HCT116 (cell line): ENCODE measurements at regions of chr20 and their contacts with region 1.

Region 1: GRCh38 chr20:63537525-63538203 is 488 bp upstream of the PTK6 start:
- DNase-seq: peak; percentile 93
- ATAC-seq: peak; percentile 84
- H3K4me3 ChIP-seq: peak overlapping the region; percentile 67
- H3K27ac ChIP-seq: peak overlapping the region; percentile 97
- H3K4me1 ChIP-seq: peaks cover 41 to 88% of the 10 kb centered on the region in 2 experiments
- H3K27me3 ChIP-seq: no peaks in the 10 kb centered on the region
- CTCF ChIP-seq: peak in 2 of 3 experiments; percentile 80 to 86; a peak in 4 of 6 replicates
- POLR2A ChIP-seq: no peak
- RAD21 ChIP-seq: no peak

Region 2: DNA sequence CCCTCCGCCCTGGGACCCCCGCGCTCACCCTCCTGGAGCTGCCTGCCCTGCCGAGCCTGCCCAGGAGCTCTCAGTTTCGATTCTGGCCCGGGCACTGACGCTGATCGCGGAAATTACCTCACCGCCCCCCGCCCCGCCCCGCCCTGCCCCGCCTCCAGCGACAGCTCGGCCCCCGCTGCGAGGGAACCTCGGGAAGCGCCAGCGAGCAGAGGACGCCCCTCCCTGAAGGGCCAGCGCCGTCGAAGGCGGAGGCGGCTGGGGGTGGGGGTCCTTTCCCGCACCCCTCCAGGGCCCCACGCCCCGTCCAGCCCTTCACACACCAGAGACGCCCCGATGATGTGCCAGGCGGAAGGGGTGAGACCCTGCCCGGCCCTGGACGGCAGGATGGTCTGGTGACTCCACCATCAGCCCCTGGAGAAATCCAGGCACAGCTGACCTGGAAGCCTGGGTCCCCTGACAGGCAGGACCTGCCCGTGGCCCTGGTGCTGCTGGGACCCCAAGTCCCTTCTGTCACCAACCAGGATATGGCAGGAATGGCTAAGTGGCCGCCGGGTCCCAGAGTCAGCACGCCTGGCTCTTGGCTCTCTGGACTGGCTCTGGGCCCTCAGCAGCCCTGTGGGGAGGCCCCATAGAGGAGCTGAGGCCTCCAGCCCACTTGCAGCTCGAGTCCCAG is 36.6 kb after region 1 on chr20 and contains the start of gene HELZ2:
- CTCF ChIA-PET with region 1: interaction called, 24 read pairs
- POLR2A ChIA-PET with region 1: interaction called, 3 read pairs
- RAD21 ChIA-PET with region 1: no interaction called
- intact Hi-C with region 1: loop called (anchors 2 kb)
- DNase-seq: peak; percentile 16
- ATAC-seq: peak; percentile 86
- H3K4me3 ChIP-seq: peak within 1 kb of the TSS; percentile 83 to 86
- H3K27ac ChIP-seq: peak within 1 kb of the TSS; percentile 44; the same call in 1 of the 2 replicates
- H3K4me1 ChIP-seq: peaks cover 12 to 27% of the 10 kb centered on the region in 2 experiments
- H3K27me3 ChIP-seq: no peaks in the 10 kb centered on the region
- CTCF ChIP-seq: no peak
- POLR2A ChIP-seq: peak; percentile 33
- RAD21 ChIP-seq: no peak
- total RNA-seq, gene HELZ2: 44.0 TPM

Region 3: DNA sequence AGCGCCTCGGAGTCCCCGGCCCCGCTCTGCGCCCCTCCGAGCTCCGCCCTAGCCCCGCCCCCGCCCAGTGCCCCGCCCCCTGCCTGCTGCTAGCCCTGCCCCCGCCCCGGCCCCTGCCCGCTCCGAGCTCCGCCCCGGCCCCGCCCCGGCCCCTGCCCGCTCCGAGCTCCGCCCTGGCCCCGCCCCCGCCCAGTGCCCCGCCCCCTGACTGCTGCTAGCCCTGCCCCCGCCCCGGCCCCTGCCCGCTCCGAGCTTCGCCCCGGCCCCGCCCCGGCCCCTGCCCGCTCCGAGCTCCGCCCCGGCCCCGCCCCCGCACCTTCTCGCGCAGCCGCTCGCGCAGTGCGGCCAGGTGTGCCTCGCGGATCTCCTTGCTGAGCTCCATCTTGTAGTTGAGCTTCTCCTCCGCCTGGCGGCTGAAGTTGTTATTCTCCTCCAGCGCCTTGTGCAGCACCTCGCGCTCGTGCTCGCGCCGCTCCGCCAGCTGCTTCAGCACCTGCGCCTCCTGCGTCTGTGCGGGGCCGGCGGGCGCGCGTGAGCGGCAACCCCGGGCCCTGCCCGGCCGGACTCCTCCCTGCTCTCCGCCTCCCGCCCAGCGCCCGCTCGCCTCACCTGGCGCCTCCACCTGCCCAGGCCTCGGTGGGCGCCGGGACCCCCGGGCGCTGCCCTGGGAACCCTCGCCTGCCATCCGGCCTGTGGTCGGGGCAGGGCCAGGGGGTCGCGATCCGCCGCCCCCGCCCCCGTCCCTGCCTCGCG is 104.3 kb after region 1 on chr20:
- CTCF ChIA-PET with region 1: interaction called, 12 read pairs
- POLR2A ChIA-PET with region 1: no interaction called
- RAD21 ChIA-PET with region 1: interaction called, 3 to 8 read pairs
- intact Hi-C with region 1: loop called (anchors 5 kb)
- DNase-seq: peak; percentile 79
- ATAC-seq: peak; percentile 83
- H3K4me3 ChIP-seq: peak overlapping the region; percentile 40 to 59
- H3K27ac ChIP-seq: peak overlapping the region; percentile 98
- H3K4me1 ChIP-seq: peaks cover 11 to 34% of the 10 kb centered on the region in 2 experiments
- H3K27me3 ChIP-seq: no peaks in the 10 kb centered on the region
- CTCF ChIP-seq: peak in 2 of 3 experiments; percentile 36 to 52; a peak in 4 of 6 replicates
- POLR2A ChIP-seq: peak; percentile 30
- RAD21 ChIP-seq: no peak; the same call in 1 of the 2 replicates

Region 4: DNA sequence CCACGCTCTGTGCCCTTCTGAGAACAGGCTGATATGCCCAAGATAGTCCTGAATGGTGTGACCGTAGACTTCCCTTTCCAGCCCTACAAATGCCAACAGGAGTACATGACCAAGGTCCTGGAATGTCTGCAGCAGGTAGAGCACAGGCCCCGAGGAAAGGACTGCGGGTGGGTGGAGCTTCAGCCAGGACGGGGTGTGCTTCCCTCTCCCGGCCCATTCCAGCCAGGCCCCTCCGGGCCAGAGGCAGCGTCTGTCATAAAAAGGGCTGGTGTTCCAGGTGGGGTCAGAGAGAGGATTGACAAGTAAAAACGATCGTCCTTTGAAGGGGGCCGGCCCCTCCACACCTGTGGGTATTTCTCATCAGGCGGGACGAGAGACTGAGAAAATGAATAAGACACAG is 121.7 kb after region 1 on chr20:
- CTCF ChIA-PET with region 1: no interaction called
- POLR2A ChIA-PET with region 1: no interaction called
- RAD21 ChIA-PET with region 1: no interaction called
- intact Hi-C with region 1: no loop called
- DNase-seq: no peak
- ATAC-seq: peak; percentile 46
- H3K4me3 ChIP-seq: peak overlapping the region; percentile 82 to 99
- H3K27ac ChIP-seq: peak overlapping the region; percentile 73
- H3K4me1 ChIP-seq: peaks cover 12 to 31% of the 10 kb centered on the region in 2 experiments
- H3K27me3 ChIP-seq: no peaks in the 10 kb centered on the region
- CTCF ChIP-seq: no peak
- POLR2A ChIP-seq: no peak
- RAD21 ChIP-seq: no peak

Region 5: DNA sequence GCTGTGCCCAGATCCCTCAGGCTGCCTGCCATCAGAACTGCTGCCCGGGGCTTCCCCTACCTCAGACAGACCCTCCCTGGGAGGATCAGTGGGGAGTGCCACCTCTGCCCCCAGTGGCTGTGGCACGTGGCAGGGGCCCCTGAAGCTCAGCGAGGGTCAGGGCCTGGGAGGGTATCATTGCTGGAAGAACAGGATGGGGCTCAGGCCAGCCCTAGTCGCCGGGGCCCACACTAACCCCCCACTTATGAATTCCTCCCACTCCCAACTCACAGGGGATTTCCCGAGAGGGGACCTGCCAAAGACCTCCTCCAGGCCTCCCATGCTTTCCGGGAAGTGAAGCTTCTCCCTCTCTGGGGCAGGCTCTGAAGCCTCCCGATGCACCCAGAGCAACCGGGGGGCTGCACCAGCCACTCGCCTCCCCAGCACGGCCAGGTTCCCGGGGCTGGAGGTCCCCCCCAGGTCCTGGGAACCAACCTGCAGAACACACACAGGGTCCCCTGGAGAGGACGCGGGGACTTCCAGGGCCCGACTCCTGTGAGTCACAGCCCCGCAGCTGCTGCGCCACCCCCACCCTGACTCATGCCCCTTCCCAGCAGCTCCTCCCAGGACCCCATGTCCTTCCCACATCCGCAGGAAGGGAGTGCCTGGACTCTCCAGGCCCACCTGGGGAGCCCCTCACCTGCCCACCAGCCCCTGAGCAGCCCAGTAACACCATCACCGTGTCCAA is 161.2 kb after region 1 on chr20:
- CTCF ChIA-PET with region 1: interaction called, 3 read pairs
- POLR2A ChIA-PET with region 1: interaction called, 4 read pairs
- RAD21 ChIA-PET with region 1: interaction called in 1 of 2 experiments, 8 read pairs
- intact Hi-C with region 1: loop called (anchors 5 kb)
- DNase-seq: peak; percentile 67
- ATAC-seq: peak; percentile 58
- H3K4me3 ChIP-seq: peak overlapping the region; percentile 37 to 41
- H3K27ac ChIP-seq: peak overlapping the region; percentile 91
- H3K4me1 ChIP-seq: peaks cover 35 to 78% of the 10 kb centered on the region in 2 experiments
- H3K27me3 ChIP-seq: no peaks in the 10 kb centered on the region
- CTCF ChIP-seq: no peak
- POLR2A ChIP-seq: no peak
- RAD21 ChIP-seq: no peak

Region 6: GRCh38 chr20:63973636-63974402 is 436.2 kb after region 1 on chr20:
- CTCF ChIA-PET with region 1: interaction called, 30 read pairs
- POLR2A ChIA-PET with region 1: interaction called, 3 read pairs
- RAD21 ChIA-PET with region 1: interaction called, 3 to 7 read pairs
- intact Hi-C with region 1: loop called (anchors 2 kb)
- DNase-seq: peak; percentile 62
- ATAC-seq: peak; percentile 85
- H3K4me3 ChIP-seq: peak overlapping the region; percentile 43 to 55
- H3K27ac ChIP-seq: peak overlapping the region; percentile 31; the same call in 1 of the 2 replicates
- H3K4me1 ChIP-seq: peaks cover 20 to 48% of the 10 kb centered on the region in 2 experiments
- H3K27me3 ChIP-seq: no peaks in the 10 kb centered on the region
- CTCF ChIP-seq: peak in 2 of 3 experiments; percentile 95 to 97; a peak in 4 of 6 replicates
- POLR2A ChIP-seq: no peak
- RAD21 ChIP-seq: no peak

Region 7: GRCh38 chr20:64119681-64120341 is 582.1 kb after region 1 on chr20:
- CTCF ChIA-PET with region 1: interaction called, 12 read pairs
- POLR2A ChIA-PET with region 1: no interaction called
- RAD21 ChIA-PET with region 1: no interaction called
- intact Hi-C with region 1: no loop called
- DNase-seq: peak; percentile 6
- ATAC-seq: peak; percentile 51
- H3K4me3 ChIP-seq: no peak overlapping the region
- H3K27ac ChIP-seq: no peak overlapping the region; the same call in 1 of the 2 replicates
- H3K4me1 ChIP-seq: peaks cover 0 to 8% of the 10 kb centered on the region in 2 experiments; a peak in 2 of 4 replicates
- H3K27me3 ChIP-seq: no peaks in the 10 kb centered on the region
- CTCF ChIP-seq: no peak
- POLR2A ChIP-seq: no peak
- RAD21 ChIP-seq: no peak